ENCODE measurements at regions of chrX and their contacts with region 1.

Region 1: DNA sequence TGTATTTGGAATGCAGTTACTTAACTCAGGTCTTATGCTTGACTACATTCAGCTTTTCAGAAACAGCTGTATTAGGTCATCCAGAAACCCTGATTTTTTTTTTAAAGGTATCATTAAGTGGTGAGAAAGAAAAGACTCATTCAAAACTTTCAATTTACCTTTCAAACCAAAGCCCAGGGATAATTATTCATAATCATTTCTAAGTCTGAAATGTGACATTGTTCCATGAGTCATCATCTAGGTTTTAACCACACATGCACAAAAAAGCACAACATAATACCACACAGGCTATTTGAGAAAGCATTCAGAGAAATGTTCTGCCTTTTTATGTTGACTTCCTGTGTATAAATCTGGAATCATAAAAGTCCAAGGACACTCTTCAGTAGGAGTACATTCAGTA is 288.2 kb downstream of the IL1RAPL2 start:
- DNase-seq: peak; percentile 77
- ATAC-seq: peak; percentile 77
- H3K4me3 ChIP-seq: no peak overlapping the region
- H3K27ac ChIP-seq: peak overlapping the region; percentile 88
- H3K4me1 ChIP-seq: peaks cover 23% of the 10 kb centered on the region
- H3K27me3 ChIP-seq: no peaks in the 10 kb centered on the region
- CTCF ChIP-seq: no peak

Region 2: GRCh38 chrX:104742345-104742744 is 111.8 kb before region 1 on chrX:
- CTCF ChIA-PET with region 1: no interaction called
- POLR2A ChIA-PET with region 1: interaction called, 3 read pairs
- intact Hi-C with region 1: loop called (anchors 1 kb)
- DNase-seq: peak; percentile 88
- ATAC-seq: peak; percentile 91
- H3K4me3 ChIP-seq: peak overlapping the region; percentile 14; the same call in 1 of the 2 replicates
- H3K27ac ChIP-seq: peak overlapping the region; percentile 79
- H3K4me1 ChIP-seq: peaks cover 37% of the 10 kb centered on the region
- H3K27me3 ChIP-seq: no peaks in the 10 kb centered on the region
- CTCF ChIP-seq: no peak

Region 3: GRCh38 chrX:104864296-104864695 is 10.1 kb after region 1 on chrX:
- CTCF ChIA-PET with region 1: no interaction called
- POLR2A ChIA-PET with region 1: no interaction called
- intact Hi-C with region 1: no loop called
- DNase-seq: peak; percentile 52
- ATAC-seq: peak; percentile 71
- H3K4me3 ChIP-seq: no peak overlapping the region
- H3K27ac ChIP-seq: no peak overlapping the region
- H3K4me1 ChIP-seq: peaks cover 8% of the 10 kb centered on the region
- H3K27me3 ChIP-seq: no peaks in the 10 kb centered on the region
- CTCF ChIP-seq: no peak

Region 4: DNA sequence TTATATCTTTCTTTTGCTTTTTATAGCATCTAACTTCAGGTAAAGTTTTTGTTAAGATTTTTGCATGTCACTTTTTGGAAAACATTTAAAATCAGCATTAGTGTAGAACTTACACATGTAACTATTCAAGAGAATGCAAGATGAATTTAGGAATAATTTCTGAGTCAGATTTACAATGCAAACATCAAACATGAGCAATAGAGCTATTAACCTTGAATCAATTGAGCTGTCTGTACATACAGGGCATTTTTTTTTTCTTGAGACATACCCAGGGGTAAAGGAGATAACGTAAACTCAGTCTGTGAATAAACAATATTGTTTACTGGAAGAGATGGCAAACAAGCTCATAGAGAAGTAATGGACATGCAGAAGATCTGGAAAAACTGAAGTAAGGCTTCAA is 23.3 kb after region 1 on chrX:
- CTCF ChIA-PET with region 1: no interaction called
- POLR2A ChIA-PET with region 1: no interaction called
- intact Hi-C with region 1: loop called (anchors 1 kb)
- DNase-seq: peak; percentile 51
- ATAC-seq: peak; percentile 80
- H3K4me3 ChIP-seq: no peak overlapping the region
- H3K27ac ChIP-seq: no peak overlapping the region
- H3K4me1 ChIP-seq: peaks cover 5% of the 10 kb centered on the region; the same call in 1 of the 2 replicates
- H3K27me3 ChIP-seq: no peaks in the 10 kb centered on the region
- CTCF ChIP-seq: no peak

Region 5: GRCh38 chrX:105167233-105167632 is 313.0 kb after region 1 on chrX:
- CTCF ChIA-PET with region 1: no interaction called
- POLR2A ChIA-PET with region 1: no interaction called
- intact Hi-C with region 1: no loop called
- DNase-seq: peak; percentile 88
- ATAC-seq: peak; percentile 89
- H3K4me3 ChIP-seq: no peak overlapping the region
- H3K27ac ChIP-seq: peak overlapping the region; percentile 49
- H3K4me1 ChIP-seq: peaks cover 23% of the 10 kb centered on the region
- H3K27me3 ChIP-seq: no peaks in the 10 kb centered on the region
- CTCF ChIP-seq: no peak

Region 6: DNA sequence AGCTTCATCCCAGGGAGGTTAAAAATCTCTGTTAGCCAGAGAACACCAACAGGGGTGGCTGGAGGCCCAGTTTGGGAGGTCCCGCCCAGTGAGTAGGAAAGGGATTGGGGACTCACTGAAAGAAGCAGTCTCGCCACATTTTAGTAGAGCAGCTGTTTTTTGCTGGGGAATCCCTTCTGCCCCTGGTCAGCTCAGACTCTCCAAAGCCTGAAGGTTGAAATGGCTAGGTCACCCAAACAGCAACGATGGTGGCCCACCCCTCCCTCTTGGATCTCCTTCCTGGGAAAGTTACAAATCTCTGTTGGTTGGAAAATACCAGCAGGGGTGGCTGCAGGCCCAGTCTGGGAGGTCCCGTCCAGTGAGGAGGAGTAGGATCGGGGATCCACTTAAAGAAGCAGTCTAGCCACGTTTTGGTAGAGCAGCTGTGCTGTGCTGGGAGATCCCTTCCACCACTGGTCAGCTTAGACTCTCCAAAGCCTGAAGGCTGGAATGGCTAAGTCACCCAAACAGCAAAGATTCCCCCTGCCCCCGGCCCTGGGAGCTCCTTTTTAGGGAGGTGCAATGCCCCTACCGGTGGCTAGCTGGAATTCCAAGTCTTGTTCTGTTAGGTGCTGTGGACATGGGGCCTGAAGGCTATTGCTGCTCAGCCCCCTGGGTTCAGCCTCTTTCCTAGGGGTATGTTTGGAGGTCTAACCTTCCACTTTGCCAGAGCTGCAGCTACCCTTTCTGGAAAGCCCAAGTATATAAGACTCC is 406.3 kb after region 1 on chrX:
- CTCF ChIA-PET with region 1: no interaction called
- POLR2A ChIA-PET with region 1: no interaction called
- intact Hi-C with region 1: no loop called
- DNase-seq: no peak
- ATAC-seq: no peak
- H3K4me3 ChIP-seq: no peak overlapping the region
- H3K27ac ChIP-seq: no peak overlapping the region
- H3K4me1 ChIP-seq: no peaks in the 10 kb centered on the region
- H3K27me3 ChIP-seq: no peaks in the 10 kb centered on the region
- CTCF ChIP-seq: no peak

Region 7: GRCh38 chrX:105349476-105349875 is 495.3 kb after region 1 on chrX:
- CTCF ChIA-PET with region 1: no interaction called
- POLR2A ChIA-PET with region 1: no interaction called
- intact Hi-C with region 1: no loop called
- DNase-seq: no peak
- ATAC-seq: no peak
- H3K4me3 ChIP-seq: no peak overlapping the region
- H3K27ac ChIP-seq: no peak overlapping the region
- H3K4me1 ChIP-seq: no peaks in the 10 kb centered on the region
- H3K27me3 ChIP-seq: no peaks in the 10 kb centered on the region
- CTCF ChIP-seq: no peak